Natural killer cell (primary cell): ENCODE measurements at regions of chr18 and their contacts with region 1.

Region 1: DNA sequence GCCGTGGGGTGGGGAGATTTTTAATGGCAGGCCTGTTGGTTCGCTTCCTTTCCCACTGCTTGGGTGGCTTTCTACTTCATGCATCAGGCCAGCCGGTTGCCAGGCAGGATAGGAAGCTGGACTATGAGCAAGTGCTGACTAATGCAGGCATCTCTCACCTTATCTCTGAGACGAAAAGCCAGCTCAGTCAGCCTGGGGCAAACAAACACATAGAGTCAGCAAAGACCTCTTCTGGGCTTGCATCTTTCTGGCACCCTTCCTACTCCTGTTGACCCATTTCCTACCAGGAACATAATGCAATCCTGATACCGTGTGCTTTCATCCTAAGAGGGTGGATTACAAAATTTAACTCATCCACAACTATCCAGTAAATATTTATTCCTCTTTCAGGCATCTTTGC is 416.6 kb upstream of the MEX3C start:
- DNase-seq: no peak
- ATAC-seq: no peak
- H3K4me3 ChIP-seq: no peak overlapping the region
- H3K4me3 Mint-ChIP-seq: no peak overlapping the region
- H3K27ac ChIP-seq: no peak overlapping the region
- H3K27ac Mint-ChIP-seq: no peak overlapping the region
- H3K4me1 ChIP-seq: no peaks in the 10 kb centered on the region
- H3K4me1 Mint-ChIP-seq: no peaks in the 10 kb centered on the region
- H3K27me3 ChIP-seq: no peaks in the 10 kb centered on the region
- H3K27me3 Mint-ChIP-seq: peaks cover 9 to 25% of the 10 kb centered on the region in 2 donors
- CTCF ChIP-seq: no peak

Region 2: GRCh38 chr18:51569153-51569552 is 44.9 kb before region 1 on chr18:
- intact Hi-C with region 1: no loop called
- DNase-seq: no peak
- ATAC-seq: no peak
- H3K4me3 ChIP-seq: no peak overlapping the region
- H3K4me3 Mint-ChIP-seq: no peak overlapping the region
- H3K27ac ChIP-seq: no peak overlapping the region
- H3K27ac Mint-ChIP-seq: no peak overlapping the region
- H3K4me1 ChIP-seq: no peaks in the 10 kb centered on the region
- H3K4me1 Mint-ChIP-seq: no peaks in the 10 kb centered on the region
- H3K27me3 ChIP-seq: no peaks in the 10 kb centered on the region
- H3K27me3 Mint-ChIP-seq: peaks cover 14 to 32% of the 10 kb centered on the region in 2 donors
- CTCF ChIP-seq: no peak

Region 3: DNA sequence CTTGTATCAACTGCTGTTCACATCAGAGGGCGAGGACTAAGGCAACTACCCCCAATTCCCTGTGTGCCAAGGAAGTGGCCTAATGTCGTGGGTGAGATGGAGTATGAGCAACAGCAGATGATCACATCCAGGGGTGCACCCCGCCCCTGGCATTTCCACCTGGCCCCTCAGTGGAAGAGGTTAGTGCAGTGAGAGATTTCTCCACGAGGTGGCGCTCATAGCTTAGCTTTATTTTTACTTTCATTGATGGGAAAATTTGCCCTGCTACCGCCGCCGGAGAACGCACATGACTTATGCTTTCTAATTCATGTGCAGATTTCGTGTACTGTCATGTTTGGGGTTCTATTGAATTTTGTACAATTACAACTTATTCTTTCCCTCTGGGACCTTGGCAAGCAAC is 54.1 kb after region 1 on chr18:
- intact Hi-C with region 1: loop called (anchors 10 kb)
- DNase-seq: peak; percentile 19 to 30
- ATAC-seq: peak in 1 of 3 donors; percentile 57
- H3K4me3 ChIP-seq: no peak overlapping the region
- H3K4me3 Mint-ChIP-seq: no peak overlapping the region
- H3K27ac ChIP-seq: no peak overlapping the region
- H3K27ac Mint-ChIP-seq: no peak overlapping the region
- H3K4me1 ChIP-seq: no peaks in the 10 kb centered on the region
- H3K4me1 Mint-ChIP-seq: peaks cover 7 to 10% of the 10 kb centered on the region in 2 donors
- H3K27me3 ChIP-seq: no peaks in the 10 kb centered on the region
- H3K27me3 Mint-ChIP-seq: peaks cover 20 to 22% of the 10 kb centered on the region in 2 donors
- CTCF ChIP-seq: peak; percentile 53

Region 4: GRCh38 chr18:52277785-52278184 is 663.8 kb after region 1 on chr18:
- intact Hi-C with region 1: no loop called
- DNase-seq: no peak
- ATAC-seq: no peak
- H3K4me3 ChIP-seq: no peak overlapping the region
- H3K4me3 Mint-ChIP-seq: no peak overlapping the region
- H3K27ac ChIP-seq: no peak overlapping the region
- H3K27ac Mint-ChIP-seq: no peak overlapping the region
- H3K4me1 ChIP-seq: no peaks in the 10 kb centered on the region
- H3K4me1 Mint-ChIP-seq: no peaks in the 10 kb centered on the region
- H3K27me3 ChIP-seq: no peaks in the 10 kb centered on the region
- H3K27me3 Mint-ChIP-seq: no peaks in the 10 kb centered on the region
- CTCF ChIP-seq: no peak